Activated CD4-positive, alpha-beta T cell treated with anti-CD3 and anti-CD28 coated beads for 36 hours (primary cell): ENCODE measurements at regions of chr10 and their contacts with region 1.

Region 1: GRCh38 chr10:70903262-70903921 is 15.0 kb upstream of the PCBD1 start:
- DNase-seq: peak; percentile 56
- ATAC-seq: no peak
- H3K4me3 Mint-ChIP-seq: no peak overlapping the region
- H3K27ac Mint-ChIP-seq: no peak overlapping the region
- H3K4me1 Mint-ChIP-seq: no peaks in the 10 kb centered on the region
- H3K27me3 Mint-ChIP-seq: no peaks in the 10 kb centered on the region

Region 2: GRCh38 chr10:71064413-71065118 is 161.2 kb after region 1 on chr10:
- CTCF ChIA-PET with region 1: no interaction called
- POLR2A ChIA-PET with region 1: no interaction called
- intact Hi-C with region 1: no loop called
- DNase-seq: no peak
- ATAC-seq: no peak
- H3K4me3 Mint-ChIP-seq: no peak overlapping the region
- H3K27ac Mint-ChIP-seq: no peak overlapping the region
- H3K4me1 Mint-ChIP-seq: no peaks in the 10 kb centered on the region
- H3K27me3 Mint-ChIP-seq: no peaks in the 10 kb centered on the region

Region 3: DNA sequence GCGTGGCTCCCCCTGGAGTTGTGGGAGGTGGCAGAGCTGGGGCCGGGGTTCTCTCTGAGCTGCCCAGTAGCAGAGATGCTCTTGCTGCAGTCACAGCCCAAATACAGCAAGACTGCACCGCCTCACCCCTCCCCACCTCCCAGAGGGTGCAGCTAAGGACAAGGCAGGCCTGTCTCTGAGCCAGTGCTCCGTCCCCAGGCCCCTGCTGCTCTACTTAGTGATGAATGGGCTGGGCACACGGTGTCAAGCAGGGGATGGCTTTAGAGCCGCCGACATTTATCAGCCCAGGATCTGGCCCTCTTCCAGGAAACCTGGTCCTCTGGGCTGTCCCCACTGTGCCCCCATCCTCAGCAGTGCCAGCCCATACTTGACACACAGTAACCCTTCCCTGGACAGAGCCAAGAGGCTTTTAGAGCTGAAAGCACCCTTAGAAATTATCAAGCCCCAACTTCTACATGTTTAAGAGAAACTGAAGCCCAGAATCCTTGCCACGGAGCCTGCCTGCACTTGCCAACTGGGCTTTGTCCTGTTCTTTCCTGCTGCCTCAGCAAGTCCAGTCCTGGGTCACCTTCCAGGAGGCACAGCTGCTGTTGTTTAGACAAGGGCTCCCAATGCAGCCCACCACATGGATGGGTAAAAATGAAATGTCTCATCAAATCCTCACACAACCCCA is 171.8 kb after region 1 on chr10:
- CTCF ChIA-PET with region 1: no interaction called
- POLR2A ChIA-PET with region 1: no interaction called
- intact Hi-C with region 1: no loop called
- DNase-seq: no peak
- ATAC-seq: no peak
- H3K4me3 Mint-ChIP-seq: no peak overlapping the region
- H3K27ac Mint-ChIP-seq: no peak overlapping the region
- H3K4me1 Mint-ChIP-seq: no peaks in the 10 kb centered on the region
- H3K27me3 Mint-ChIP-seq: no peaks in the 10 kb centered on the region

Region 4: DNA sequence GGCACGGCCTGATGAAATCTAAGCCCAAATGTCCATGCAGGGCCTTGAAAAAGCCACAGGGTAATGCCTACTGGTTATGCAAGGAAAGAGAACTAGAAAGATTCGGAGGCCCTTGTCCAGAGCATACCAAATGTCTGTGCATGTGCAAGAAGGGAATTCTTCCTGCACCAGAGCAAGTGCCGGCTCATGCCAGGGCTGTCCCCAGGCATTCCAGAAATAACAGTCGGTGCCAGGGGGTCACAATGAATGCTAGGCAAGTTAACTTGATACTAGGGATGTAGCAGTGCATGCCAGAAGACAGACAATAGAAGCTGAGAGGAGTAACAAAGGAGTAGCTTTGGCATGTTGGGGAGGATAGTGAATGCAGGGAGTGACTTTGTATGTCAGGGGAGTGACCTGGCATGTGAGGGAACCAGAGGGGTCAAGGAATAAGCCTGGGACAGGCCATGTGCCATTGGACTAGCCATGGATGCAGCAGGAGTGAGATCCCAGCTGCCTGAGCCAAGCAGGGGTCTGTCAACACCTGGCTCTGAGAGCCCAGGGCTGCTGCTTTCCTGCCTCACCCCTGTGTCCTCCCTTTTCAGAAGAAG is 189.5 kb after region 1 on chr10:
- CTCF ChIA-PET with region 1: no interaction called
- POLR2A ChIA-PET with region 1: no interaction called
- intact Hi-C with region 1: no loop called
- DNase-seq: no peak
- ATAC-seq: no peak
- H3K4me3 Mint-ChIP-seq: no peak overlapping the region
- H3K27ac Mint-ChIP-seq: no peak overlapping the region
- H3K4me1 Mint-ChIP-seq: peaks cover 15% of the 10 kb centered on the region
- H3K27me3 Mint-ChIP-seq: peaks cover 21% of the 10 kb centered on the region

Region 5: DNA sequence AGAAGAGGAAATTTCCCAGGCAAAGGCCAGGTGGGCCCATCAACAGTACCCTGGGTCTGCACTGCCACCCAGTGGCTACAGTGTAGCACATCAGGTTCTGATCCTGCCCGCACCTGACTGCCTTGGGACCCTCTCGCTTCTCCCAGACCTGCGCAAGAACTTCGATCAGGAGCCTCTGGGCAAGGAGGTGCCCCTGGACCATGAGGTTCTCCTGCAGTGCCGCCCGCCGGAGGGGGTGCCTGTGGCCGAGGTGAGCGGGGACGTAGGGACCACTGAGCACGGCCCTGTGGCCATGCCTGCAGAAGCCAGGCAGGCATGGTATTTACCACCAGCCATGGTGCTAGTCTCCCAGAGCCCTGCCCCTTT is 381.8 kb after region 1 on chr10:
- CTCF ChIA-PET with region 1: interaction called, 5 read pairs
- POLR2A ChIA-PET with region 1: no interaction called
- intact Hi-C with region 1: loop called in 1 of 2 experiments (anchors 1 kb)
- DNase-seq: peak; percentile 60
- ATAC-seq: peak; percentile 74
- H3K4me3 Mint-ChIP-seq: no peak overlapping the region
- H3K27ac Mint-ChIP-seq: no peak overlapping the region
- H3K4me1 Mint-ChIP-seq: no peaks in the 10 kb centered on the region
- H3K27me3 Mint-ChIP-seq: no peaks in the 10 kb centered on the region